Activated T-helper 1 cell treated with anti-CD3 and anti-CD28 coated beads, Interleukin-12 subunit alpha, Interleukin-12 subunit beta, Interleukin-2, Interleukin-4 antibody, amounts not matched to agents 30 ng/mL and 10 ng/mL and 1 ng/mL, durations not matched to agents 14 hours and 24 hours and 36 hours (primary cell): ENCODE measurements at regions of chr3 and their contacts with region 1.

Region 1: GRCh38 chr3:106428565-106428994 is 559.8 kb upstream of the CBLB start:
- DNase-seq: no peak
- H3K4me3 Mint-ChIP-seq: no peak overlapping the region
- H3K27ac Mint-ChIP-seq: peak overlapping the region; percentile 93
- H3K4me1 Mint-ChIP-seq: peaks cover 57% of the 10 kb centered on the region
- H3K27me3 Mint-ChIP-seq: no peaks in the 10 kb centered on the region

Region 2: GRCh38 chr3:105774444-105775180 is 654.0 kb before region 1 on chr3:
- intact Hi-C with region 1: loop called (anchors 1 kb)
- DNase-seq: no peak
- H3K4me3 Mint-ChIP-seq: no peak overlapping the region
- H3K27ac Mint-ChIP-seq: peak overlapping the region; percentile 76
- H3K4me1 Mint-ChIP-seq: peaks cover 71% of the 10 kb centered on the region
- H3K27me3 Mint-ChIP-seq: no peaks in the 10 kb centered on the region

Region 3: GRCh38 chr3:105876780-105877327 is 551.7 kb before region 1 on chr3:
- intact Hi-C with region 1: loop called (anchors 1 kb)
- DNase-seq: no peak
- H3K4me3 Mint-ChIP-seq: peak overlapping the region; percentile 64
- H3K27ac Mint-ChIP-seq: peak overlapping the region; percentile 80
- H3K4me1 Mint-ChIP-seq: peaks cover 35% of the 10 kb centered on the region
- H3K27me3 Mint-ChIP-seq: no peaks in the 10 kb centered on the region

Region 4: DNA sequence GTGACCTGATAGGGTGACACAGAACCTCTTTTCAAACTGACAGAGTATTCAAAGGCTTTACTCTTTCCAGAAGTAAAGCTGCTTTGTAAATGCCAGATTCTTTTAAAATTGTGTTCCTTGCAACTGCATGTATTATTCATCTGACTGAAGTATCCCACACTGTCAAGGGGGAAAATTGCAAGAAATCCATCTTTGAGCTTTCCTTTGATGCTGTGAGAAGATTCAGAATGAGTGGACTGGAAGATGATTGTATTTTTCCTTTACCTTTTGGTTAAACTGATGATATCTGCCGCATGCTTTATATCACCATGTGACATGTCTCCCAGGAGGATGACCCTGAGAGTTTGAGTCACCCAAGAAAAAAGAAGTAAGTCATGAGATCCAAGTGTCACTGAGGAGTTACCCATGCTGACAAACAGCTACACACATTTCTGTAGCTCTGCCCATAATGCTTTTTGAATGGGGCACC is 308.9 kb before region 1 on chr3:
- intact Hi-C with region 1: loop called (anchors 2 kb)
- DNase-seq: no peak
- H3K4me3 Mint-ChIP-seq: peak overlapping the region; percentile 20
- H3K27ac Mint-ChIP-seq: peak overlapping the region; percentile 90
- H3K4me1 Mint-ChIP-seq: peaks cover 37% of the 10 kb centered on the region
- H3K27me3 Mint-ChIP-seq: no peaks in the 10 kb centered on the region

Region 5: GRCh38 chr3:106232956-106233355 is 195.6 kb before region 1 on chr3:
- intact Hi-C with region 1: loop called (anchors 1 kb)
- DNase-seq: no peak
- H3K4me3 Mint-ChIP-seq: no peak overlapping the region
- H3K27ac Mint-ChIP-seq: peak overlapping the region; percentile 46
- H3K4me1 Mint-ChIP-seq: peaks cover 46% of the 10 kb centered on the region
- H3K27me3 Mint-ChIP-seq: no peaks in the 10 kb centered on the region

Region 6: GRCh38 chr3:106609666-106610301 is 181.2 kb after region 1 on chr3:
- intact Hi-C with region 1: loop called (anchors 1 kb)
- DNase-seq: peak; percentile 50
- H3K4me3 Mint-ChIP-seq: no peak overlapping the region
- H3K27ac Mint-ChIP-seq: peak overlapping the region; percentile 66
- H3K4me1 Mint-ChIP-seq: peaks cover 30% of the 10 kb centered on the region
- H3K27me3 Mint-ChIP-seq: no peaks in the 10 kb centered on the region